ENCODE measurements at regions of chr16 and their contacts with region 1.

Region 1: DNA sequence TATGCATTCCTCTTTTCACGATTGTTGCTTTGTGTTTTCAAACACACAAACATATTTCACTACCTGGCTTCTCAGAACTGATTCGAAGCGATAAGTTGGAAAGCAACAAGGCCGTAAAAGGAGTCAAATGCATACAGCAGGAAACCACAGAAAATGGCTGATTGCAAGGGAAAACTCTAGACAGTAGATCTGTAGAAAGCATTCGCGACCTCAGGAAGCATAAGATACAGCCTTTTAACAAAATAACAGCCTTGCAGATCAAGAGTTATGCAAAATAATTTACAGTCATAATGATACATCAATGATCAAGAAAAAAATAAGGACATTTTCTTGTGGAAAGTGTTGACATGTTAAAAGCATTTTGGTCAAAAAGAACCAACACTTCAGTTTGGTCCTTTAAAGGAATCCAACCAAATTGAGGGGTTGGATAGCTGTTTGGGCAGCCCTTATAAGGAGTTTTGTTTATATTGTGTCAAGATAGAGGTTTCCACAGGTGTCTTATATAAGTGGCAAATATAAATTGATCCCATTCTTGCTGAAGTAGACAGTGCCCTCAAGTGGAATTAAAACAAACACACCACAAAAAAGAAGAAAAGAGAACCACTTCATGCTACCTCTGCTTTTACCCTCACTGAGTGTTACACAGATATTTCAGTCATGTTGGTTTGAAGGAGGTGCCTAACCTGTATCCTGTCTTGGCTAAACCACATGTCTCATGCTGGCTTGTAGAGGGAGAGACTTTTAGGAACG is 5.5 kb downstream of the CYLD start:
- DNase-seq: no peak
- ATAC-seq: peak; percentile 61
- H3K4me3 Mint-ChIP-seq: peak overlapping the region; percentile 45
- H3K27ac Mint-ChIP-seq: peak overlapping the region; percentile 11
- H3K4me1 Mint-ChIP-seq: peaks cover 53% of the 10 kb centered on the region
- H3K27me3 Mint-ChIP-seq: no peaks in the 10 kb centered on the region
- CTCF ChIP-seq: no peak

Region 2: DNA sequence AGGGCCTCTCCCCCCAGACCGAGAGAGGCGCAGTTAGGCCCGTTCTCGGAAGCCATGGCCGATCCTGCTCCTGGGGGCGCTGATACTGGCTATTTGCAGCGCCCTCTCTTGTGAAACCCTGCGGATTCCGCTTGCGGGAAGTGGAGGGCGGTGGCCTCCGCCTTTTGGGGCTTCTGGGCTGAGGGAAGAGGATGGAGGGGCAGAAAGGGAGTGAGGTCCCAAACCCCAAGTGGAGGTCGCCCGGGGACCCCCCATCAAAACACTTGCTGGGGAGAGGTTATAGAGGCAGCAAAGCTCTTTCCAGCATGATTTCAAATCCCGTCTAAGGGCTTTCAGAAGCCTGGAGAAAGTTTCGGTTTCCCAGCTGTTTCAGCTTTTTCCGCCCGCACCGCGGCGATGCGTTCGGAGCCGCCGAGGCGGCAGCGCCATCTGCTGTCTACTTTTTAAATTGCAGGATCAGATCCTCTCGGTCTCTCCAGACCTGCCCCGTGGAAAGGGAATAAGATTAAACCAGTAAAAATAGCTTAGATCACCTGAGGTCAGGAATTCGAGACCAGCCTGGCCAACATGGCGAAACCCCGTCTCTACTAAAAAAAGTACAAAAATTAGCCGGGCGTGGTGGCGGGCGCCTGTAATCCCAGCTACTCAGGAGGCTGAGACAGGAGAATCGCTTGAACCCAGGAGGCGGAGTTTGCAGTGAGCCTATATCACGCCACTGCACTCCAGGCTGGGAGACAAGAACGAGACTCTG is 82.1 kb before region 1 on chr16:
- CTCF ChIA-PET with region 1: interaction called, 169 read pairs
- POLR2A ChIA-PET with region 1: interaction called, 19 read pairs
- intact Hi-C with region 1: loop called (anchors 1 kb)
- DNase-seq: peak; percentile 68
- ATAC-seq: peak; percentile 70
- H3K4me3 Mint-ChIP-seq: peak overlapping the region; percentile 81
- H3K27ac Mint-ChIP-seq: peak overlapping the region; percentile 65
- H3K4me1 Mint-ChIP-seq: peaks cover 23% of the 10 kb centered on the region
- H3K27me3 Mint-ChIP-seq: no peaks in the 10 kb centered on the region
- CTCF ChIP-seq: no peak

Region 3: DNA sequence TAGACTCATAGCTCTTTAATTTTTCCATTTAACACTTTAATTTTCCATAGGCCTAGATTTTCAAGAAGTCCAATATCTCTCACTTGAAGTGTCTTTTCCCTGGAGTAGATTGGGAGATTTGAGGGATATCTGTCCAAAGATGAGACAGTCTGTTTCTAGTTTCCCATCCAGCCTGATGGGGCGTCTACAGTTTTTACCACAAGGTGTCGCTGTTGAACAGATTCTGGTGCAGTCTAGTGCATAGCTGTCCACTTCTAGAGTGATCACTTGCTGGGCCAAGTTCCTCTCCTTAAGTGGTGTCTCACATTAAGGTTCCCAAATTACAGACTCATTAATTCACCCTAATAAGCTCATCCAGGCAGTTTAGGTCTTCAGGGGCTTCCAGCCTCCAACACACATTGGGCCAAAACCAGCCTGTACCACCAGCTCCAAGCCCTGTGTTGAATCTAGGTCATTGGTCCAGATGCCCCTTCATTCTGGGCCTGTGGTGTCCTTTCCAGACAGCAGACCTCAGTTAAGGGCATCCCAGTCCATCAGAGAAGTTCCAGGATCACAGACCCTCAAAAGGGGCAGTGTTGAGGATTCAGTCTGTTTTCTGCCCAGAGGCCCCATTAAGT is 75.6 kb before region 1 on chr16:
- CTCF ChIA-PET with region 1: interaction called, 169 read pairs
- POLR2A ChIA-PET with region 1: interaction called, 19 read pairs
- intact Hi-C with region 1: loop called (anchors 1 kb)
- DNase-seq: no peak
- ATAC-seq: peak; percentile 36
- H3K4me3 Mint-ChIP-seq: no peak overlapping the region
- H3K27ac Mint-ChIP-seq: peak overlapping the region; percentile 46
- H3K4me1 Mint-ChIP-seq: peaks cover 7% of the 10 kb centered on the region
- H3K27me3 Mint-ChIP-seq: no peaks in the 10 kb centered on the region
- CTCF ChIP-seq: no peak